Common myeloid progenitor, CD34-positive (primary cell): ENCODE measurements at regions of chr3 and their contacts with region 1.

Region 1: GRCh38 chr3:72756900-72757299 is 91.3 kb downstream of the SHQ1 start:
- DNase-seq: peak; percentile 80 to 97 (median 94)
- H3K4me3 ChIP-seq: peak overlapping the region in 3 of 7 experiments; percentile 29 to 55 (median 33)
- H3K27ac ChIP-seq: no peak overlapping the region
- H3K4me1 ChIP-seq: peaks cover 16 to 56% (median 26%) of the 10 kb centered on the region in 4 experiments
- H3K27me3 ChIP-seq: no peaks in the 10 kb centered on the region

Region 2: DNA sequence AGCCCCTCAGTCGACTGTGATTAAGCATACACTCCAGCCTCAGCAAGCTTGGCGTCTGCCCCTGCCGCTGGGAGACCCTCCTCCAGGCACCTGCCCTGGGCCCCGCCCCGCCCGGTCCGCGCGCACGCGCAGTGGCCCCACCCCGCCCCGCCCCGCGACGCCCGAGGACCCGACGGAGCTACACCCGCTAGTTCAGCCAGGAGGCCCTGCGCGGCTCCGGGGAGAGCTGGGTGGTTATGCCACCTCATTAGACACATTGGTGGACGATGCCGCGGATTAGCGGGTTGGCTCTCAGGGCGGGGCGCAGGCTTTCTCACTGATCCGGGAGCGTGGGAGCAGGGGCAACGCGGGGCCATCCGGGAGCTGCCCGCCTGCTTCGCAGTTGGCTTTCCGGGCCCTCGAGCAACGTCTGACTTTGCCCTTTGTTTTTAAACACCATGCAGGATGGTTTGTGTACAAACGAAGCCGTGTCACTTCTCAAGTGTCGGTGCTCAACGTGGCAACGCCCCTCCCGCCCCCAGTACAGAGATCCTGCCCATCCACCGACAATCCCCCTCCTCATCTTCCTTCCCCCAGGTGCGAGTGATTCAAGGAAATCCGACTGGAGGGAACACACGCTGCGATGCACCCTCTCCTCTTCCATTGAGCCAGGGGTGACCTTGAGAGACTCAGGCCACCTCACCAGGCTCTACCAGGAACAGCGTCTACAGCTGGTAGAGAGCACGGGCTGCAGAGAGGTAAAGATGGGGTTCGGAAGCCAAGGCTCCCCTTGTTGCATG is 18.0 kb before region 1 on chr3:
- CTCF ChIA-PET with region 1: interaction called, 19 read pairs
- POLR2A ChIA-PET with region 1: no interaction called
- DNase-seq: peak; percentile 64 to 82 (median 76)
- H3K4me3 ChIP-seq: peak overlapping the region; percentile 29 to 86 (median 70)
- H3K27ac ChIP-seq: no peak overlapping the region
- H3K4me1 ChIP-seq: peaks cover 0 to 20% (median 13%) of the 10 kb centered on the region in 4 experiments
- H3K27me3 ChIP-seq: no peaks in the 10 kb centered on the region

Region 3: DNA sequence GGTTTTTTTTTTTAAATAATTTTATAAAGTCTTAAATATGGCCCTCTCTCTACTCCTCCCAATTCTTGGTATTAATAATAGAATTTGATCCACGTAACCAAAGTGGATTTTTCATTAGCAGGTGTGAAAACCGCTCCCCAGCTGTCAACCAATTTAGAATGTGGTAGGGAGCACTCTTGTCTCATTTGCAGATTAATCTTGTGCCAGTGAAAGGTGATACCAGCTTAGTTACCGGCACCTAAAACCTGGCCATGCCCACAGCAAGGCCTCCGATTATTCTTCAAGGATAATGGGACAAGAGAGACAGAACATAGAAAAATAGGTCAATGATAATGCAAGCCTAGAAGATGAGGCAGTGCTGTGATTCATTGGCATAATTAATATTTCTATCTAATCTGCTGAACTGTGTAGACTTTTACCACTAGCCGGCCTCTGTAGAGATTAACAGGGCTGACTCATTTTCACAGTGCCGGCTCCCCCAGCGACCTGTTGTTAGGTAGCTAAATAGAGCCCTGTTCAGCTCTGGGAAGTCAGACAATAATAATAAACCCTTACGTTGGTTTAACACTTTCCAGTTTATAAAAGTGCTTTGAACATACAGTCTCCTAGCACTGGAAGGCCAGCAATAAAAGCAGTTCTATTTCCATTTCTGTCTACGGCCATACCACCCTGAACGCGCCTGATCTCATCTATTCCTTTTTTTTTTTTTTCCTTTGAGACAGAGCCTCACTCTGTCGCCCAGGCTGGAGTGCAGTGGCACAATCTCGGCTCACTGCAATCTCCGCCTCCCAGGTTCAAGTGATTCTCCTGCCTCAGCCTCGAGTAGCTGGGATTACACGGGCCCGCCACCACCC is 11.5 kb before region 1 on chr3:
- CTCF ChIA-PET with region 1: interaction called, 19 read pairs
- POLR2A ChIA-PET with region 1: no interaction called
- DNase-seq: no peak
- H3K4me3 ChIP-seq: no peak overlapping the region
- H3K27ac ChIP-seq: no peak overlapping the region
- H3K4me1 ChIP-seq: peaks cover 0 to 3% (median 2%) of the 10 kb centered on the region in 4 experiments
- H3K27me3 ChIP-seq: no peaks in the 10 kb centered on the region

Region 4: DNA sequence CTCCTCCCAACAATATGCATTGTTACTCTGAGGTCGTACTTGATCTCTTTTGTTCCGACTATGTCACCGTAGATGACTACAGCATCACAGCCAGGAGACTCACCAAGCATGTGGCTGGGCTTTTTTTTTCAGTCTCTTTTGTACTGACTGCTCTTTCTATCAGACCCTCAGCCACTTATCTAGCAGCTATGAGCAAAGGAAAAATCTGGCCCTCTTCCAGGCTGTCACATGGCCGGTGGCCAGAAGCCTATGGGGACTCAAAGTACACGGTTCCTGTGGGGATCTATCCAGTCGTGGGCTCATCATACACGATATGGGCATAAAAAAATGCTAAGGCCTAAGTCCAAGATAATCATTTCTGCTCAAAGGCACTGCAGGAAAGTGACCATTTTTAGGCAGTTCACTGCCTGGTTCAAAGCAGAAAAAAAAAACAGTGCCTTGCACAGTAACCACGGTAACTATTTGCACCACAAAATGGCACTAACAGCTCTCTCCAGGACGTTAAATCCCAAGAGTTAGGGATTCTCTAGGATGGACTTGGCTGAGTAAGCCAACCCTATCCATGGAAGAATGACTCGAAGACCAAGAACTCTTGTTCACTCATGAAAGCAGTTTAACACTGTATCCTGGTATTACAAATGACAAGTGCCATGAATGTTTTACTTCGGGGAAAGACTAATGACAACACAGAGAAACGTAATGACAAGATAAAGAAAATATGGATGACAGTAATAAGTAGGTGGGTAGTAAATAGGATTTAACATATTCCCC is 41.1 kb after region 1 on chr3:
- CTCF ChIA-PET with region 1: no interaction called
- POLR2A ChIA-PET with region 1: no interaction called
- DNase-seq: peak in 1 of 3 donors; percentile 7
- H3K4me3 ChIP-seq: no peak overlapping the region
- H3K27ac ChIP-seq: no peak overlapping the region
- H3K4me1 ChIP-seq: no peaks in the 10 kb centered on the region
- H3K27me3 ChIP-seq: no peaks in the 10 kb centered on the region